ENCODE measurements at regions of chr17 and their contacts with region 1.

Region 1: GRCh38 chr17:6666077-6666521 is 14.5 kb downstream of the C17orf100 start:
- DNase-seq: peak; percentile 61
- H3K4me3 ChIP-seq: no peak overlapping the region
- H3K27ac ChIP-seq: no peak overlapping the region
- H3K4me1 ChIP-seq: no peaks in the 10 kb centered on the region
- H3K27me3 ChIP-seq: no peaks in the 10 kb centered on the region
- CTCF ChIP-seq: peak; percentile 57 to 89 (median 78)
- POLR2A ChIP-seq: no peak

Region 2: DNA sequence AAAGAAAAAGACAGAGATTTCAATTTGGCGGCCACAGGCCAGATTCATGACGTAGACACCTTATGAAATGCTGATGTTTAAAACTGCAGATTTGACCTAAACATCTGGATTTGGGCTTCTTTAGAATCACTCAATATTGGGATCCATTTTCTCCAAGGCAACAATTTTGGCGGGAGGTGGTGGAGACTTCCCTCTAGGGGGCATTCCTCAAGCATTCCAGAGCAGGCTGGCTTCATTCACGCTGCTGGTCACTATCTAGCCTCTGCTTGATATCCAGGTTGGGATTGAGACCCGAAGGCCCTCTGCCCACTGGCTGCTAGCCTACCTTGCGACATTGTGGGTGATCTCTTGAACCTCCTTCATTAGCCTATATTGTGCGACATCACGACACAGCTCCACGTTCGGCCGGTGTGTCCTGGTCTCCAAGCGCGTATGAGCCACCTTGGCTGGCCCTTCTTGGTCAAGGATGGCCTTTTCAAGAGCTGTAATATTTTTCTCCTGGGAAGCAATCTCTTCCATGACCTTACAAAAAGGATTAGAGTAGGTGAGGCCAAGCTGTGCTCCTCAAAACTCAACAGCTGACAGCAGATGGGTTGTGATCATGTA is 134.4 kb after region 1 on chr17:
- intact Hi-C with region 1: no loop called
- DNase-seq: no peak
- H3K4me3 ChIP-seq: no peak overlapping the region
- H3K27ac ChIP-seq: no peak overlapping the region
- H3K4me1 ChIP-seq: no peaks in the 10 kb centered on the region
- H3K27me3 ChIP-seq: no peaks in the 10 kb centered on the region
- CTCF ChIP-seq: no peak
- POLR2A ChIP-seq: no peak

Region 3: DNA sequence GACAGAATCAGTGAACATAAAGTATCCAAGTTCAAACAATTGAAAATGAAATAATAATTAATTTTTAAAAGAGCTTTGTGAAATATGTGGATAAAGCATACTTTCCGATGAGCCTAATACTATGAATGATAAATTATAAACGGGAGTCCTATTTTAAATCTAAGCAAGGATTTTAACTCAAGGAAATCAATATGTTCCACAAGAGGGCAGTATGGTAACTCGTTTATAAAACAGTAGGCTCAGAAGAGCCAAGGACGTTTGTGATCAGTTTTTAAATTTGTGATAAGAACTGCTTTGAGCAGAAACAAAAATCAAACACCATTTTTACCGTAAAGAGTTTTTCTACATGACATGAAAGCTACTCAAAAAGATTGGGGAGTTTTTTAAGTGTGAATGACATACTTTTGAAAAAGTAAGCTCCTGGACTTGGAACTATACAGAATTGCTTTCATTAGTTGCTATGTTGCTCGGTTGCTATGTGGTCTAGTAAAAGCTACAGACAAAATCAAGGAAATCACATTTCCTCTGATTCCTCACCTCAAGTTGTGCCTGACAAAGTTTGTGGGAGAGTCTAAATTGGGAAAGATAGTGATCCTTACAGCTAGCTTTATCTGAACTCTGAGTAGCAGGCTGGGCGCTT is 177.3 kb after region 1 on chr17:
- intact Hi-C with region 1: loop called (anchors 5 kb)
- DNase-seq: no peak
- H3K4me3 ChIP-seq: no peak overlapping the region
- H3K27ac ChIP-seq: no peak overlapping the region
- H3K4me1 ChIP-seq: no peaks in the 10 kb centered on the region
- H3K27me3 ChIP-seq: no peaks in the 10 kb centered on the region
- CTCF ChIP-seq: peak; percentile 14 to 66 (median 48)
- POLR2A ChIP-seq: no peak

Measured in prostate gland (tissue), 2 donors.